ENCODE measurements at regions of chr2 and their contacts with region 1.

Region 1: DNA sequence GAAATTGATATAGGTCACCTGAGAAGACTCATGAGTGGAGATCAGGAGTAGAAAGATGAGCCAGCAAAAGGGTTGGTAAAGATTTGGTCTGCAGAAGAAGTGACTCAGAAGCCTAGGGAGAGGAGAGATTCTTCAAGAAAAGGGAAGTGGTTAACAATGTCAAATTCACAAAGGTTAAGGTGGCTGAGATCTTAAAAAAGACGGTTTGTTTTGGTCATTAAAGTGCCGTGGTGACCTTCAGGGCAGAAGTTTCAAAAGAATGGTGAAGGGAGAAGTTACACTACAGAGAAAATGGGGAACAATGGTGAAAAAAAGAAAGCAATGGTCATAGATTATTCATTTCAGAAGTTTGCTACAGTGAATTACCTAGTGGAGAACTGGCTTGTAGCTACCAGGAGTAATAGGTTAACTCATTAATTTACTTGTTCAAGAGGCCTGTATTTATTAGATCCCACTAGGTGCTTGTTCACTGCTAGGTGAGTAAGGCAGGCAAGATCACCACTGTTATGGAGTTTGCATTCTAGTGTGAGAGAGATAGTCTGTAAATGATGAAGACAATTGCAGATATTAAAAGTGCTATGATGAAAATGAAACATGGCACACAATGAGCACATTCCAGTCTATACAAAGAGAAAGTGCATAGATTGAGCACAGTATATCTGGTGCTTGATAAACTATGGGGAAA is 43.0 kb downstream of the FBXO48 start:
- DNase-seq: no peak
- ATAC-seq: peak; percentile 78
- H3K4me3 Mint-ChIP-seq: no peak overlapping the region
- H3K27ac Mint-ChIP-seq: no peak overlapping the region
- H3K4me1 Mint-ChIP-seq: peaks cover 29% of the 10 kb centered on the region
- H3K27me3 Mint-ChIP-seq: no peaks in the 10 kb centered on the region
- CTCF ChIP-seq: no peak

Region 2: GRCh38 chr2:68287580-68288441 is 136.3 kb before region 1 on chr2:
- CTCF ChIA-PET with region 1: no interaction called
- POLR2A ChIA-PET with region 1: no interaction called
- intact Hi-C with region 1: no loop called
- DNase-seq: no peak
- ATAC-seq: no peak
- H3K4me3 Mint-ChIP-seq: no peak overlapping the region
- H3K27ac Mint-ChIP-seq: no peak overlapping the region
- H3K4me1 Mint-ChIP-seq: peaks cover 6% of the 10 kb centered on the region
- H3K27me3 Mint-ChIP-seq: no peaks in the 10 kb centered on the region
- CTCF ChIP-seq: no peak

Region 3: DNA sequence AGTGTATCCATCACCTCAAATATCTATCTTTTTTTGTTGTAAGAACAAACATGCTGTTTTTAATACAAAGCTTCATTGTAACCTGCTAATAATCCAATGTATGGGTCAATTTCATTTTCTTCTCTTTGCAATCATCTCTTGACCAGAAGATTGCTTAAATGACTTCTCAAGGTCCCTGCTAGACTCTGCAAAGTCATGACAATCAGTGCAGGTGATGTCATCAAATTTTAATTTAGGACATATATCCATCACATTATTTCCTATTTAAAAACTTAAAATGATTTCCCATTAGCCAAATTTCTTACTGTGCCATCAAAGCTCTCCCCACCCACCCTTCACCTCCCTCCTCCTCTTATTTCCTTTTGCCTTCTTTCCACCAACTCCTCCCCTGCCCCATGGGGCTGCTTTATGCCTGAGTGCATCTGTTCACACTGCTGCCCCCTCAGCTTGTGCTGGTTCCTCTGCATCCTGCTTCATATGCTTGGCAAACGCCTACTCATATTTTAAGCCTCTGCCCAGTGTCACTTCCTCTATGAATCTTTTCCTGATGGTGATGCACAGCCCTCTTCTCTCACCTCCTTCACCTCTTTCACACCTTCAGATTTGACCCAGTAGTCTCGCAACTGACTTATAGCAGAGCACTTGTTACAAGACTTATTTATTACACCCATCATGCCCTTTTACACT is 38.7 kb before region 1 on chr2:
- CTCF ChIA-PET with region 1: interaction called, 5 read pairs
- POLR2A ChIA-PET with region 1: interaction called, 11 read pairs
- intact Hi-C with region 1: loop called (anchors 1 kb)
- DNase-seq: no peak
- ATAC-seq: peak; percentile 69
- H3K4me3 Mint-ChIP-seq: peak overlapping the region; percentile 29
- H3K27ac Mint-ChIP-seq: peak overlapping the region; percentile 91
- H3K4me1 Mint-ChIP-seq: peaks cover 97% of the 10 kb centered on the region
- H3K27me3 Mint-ChIP-seq: no peaks in the 10 kb centered on the region
- CTCF ChIP-seq: no peak

Region 4: DNA sequence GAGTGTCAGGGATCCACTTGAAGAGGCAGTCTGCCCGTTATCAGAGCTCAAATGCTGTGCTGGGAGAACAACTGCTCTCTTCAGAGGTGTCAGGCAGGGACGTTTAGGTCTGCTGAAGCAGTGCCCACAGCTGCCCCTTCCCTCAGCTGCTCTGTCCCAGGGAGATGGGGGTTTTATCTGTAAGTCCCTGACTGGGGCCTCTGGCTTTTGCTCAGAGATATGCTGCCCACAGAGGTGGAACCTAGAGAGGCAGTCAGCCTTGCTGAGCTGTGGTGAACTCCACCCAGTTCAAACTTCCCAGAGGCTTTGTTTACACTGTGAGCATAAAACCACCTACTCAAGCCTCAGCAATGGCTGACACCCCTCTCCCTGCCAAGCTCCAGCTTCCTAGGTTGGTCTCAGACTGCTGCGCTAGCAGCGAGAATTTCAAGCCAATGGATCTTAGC is 20.9 kb before region 1 on chr2:
- CTCF ChIA-PET with region 1: interaction called, 5 read pairs
- POLR2A ChIA-PET with region 1: interaction called, 18 read pairs
- intact Hi-C with region 1: loop called (anchors 1 kb)
- DNase-seq: peak; percentile 43
- ATAC-seq: peak; percentile 89
- H3K4me3 Mint-ChIP-seq: peak overlapping the region; percentile 63
- H3K27ac Mint-ChIP-seq: peak overlapping the region; percentile 88
- H3K4me1 Mint-ChIP-seq: peaks cover 98% of the 10 kb centered on the region
- H3K27me3 Mint-ChIP-seq: no peaks in the 10 kb centered on the region
- CTCF ChIP-seq: no peak

Region 5: GRCh38 chr2:68411397-68412126 is 12.5 kb before region 1 on chr2:
- CTCF ChIA-PET with region 1: no interaction called
- POLR2A ChIA-PET with region 1: interaction called, 8 read pairs
- intact Hi-C with region 1: loop called (anchors 1 kb)
- DNase-seq: no peak
- ATAC-seq: peak; percentile 98
- H3K4me3 Mint-ChIP-seq: peak overlapping the region; percentile 78
- H3K27ac Mint-ChIP-seq: peak overlapping the region; percentile 93
- H3K4me1 Mint-ChIP-seq: peaks cover 97% of the 10 kb centered on the region
- H3K27me3 Mint-ChIP-seq: no peaks in the 10 kb centered on the region
- CTCF ChIP-seq: no peak